BJ (cell line): ENCODE measurements at regions of chr6 and their contacts with region 1.

Region 1: DNA sequence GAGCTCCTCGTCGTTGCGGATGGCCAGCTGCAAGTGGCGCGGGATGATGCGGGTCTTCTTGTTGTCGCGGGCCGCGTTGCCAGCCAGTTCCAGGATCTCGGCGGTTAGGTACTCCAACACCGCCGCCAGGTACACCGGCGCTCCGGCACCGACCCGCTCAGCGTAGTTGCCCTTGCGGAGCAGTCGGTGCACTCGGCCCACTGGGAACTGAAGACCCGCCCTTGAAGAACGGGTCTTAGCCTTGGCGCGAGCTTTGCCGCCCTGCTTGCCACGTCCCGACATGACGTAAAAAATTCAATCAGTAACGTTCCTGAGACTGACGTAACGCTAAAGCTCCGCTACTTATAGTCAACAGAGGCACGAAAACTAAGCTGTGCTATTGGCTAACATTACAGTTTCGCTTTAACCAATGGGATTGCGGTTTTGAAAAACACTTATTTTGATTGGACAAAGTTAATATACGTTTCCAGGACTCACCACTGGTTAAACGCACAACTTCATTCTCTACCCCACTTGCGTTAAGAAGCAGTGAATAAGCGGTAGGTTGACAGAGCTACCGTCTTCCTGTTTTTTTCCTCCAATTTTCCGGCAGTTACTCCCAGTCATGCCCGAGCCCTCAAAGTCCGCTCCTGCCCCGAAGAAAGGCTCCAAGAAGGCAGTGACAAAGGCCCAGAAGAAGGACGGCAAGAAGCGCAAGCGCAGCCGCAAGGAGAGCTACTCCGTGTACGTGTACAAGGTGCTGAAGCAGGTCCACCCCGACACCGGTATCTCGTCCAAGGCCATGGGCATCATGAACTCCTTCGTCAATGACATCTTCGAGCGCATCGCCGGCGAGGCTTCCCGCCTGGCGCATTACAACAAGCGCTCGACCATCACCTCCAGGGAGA is 73.9 kb downstream of the OR2B2 start:
- DNase-seq: peak; percentile 99
- H3K4me3 ChIP-seq: peak overlapping the region; percentile 60
- H3K27me3 ChIP-seq: no peaks in the 10 kb centered on the region
- CTCF ChIP-seq: no peak

Region 2: DNA sequence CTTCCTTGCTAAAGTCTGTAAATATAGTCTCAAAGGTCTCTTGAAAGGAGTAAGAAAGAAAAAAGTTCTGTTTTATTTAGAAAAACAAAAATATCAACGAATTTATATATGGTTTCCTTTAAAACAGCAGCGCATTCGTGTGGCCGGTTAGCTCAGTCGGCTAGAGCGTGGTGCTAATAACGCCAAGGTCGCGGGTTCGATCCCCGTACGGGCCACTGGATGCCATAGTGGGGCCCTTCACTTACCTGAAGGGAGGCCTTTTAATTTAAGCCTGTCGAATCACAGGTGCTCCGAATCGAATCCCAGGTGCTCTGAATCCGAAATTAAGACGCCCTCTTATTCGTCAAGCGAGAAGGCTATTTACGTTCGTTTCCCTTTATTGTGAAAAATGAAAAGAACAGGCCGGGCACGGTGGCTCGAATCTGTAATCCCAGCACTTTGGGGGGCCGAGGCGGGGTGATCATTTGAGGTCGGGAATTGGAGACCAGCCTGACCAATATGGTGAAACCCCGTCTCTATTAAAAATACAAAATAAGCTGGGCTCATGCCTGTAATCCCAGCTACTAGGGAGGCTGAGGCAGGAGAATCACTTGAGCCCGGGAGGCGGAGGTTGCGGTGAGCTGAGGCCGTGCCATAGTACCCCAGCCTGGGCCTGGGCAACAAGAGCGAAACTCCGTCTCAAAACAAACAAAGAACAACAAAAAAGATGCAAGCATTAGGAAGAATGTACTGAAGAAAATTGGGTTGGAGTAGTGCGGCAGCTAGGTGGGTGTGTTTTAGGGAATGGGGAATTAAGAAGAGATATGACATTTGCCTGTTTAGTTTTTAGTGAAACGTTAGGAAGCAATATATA is 169.6 kb before region 1 on chr6:
- CTCF ChIA-PET with region 1: no interaction called
- POLR2A ChIA-PET with region 1: no interaction called
- DNase-seq: no peak
- H3K4me3 ChIP-seq: 0 out of 2 replicates have a peak overlapping the region, but pooled peaks have one; percentile 0
- H3K27me3 ChIP-seq: peaks cover 2% of the 10 kb centered on the region
- CTCF ChIP-seq: no peak

Region 3: DNA sequence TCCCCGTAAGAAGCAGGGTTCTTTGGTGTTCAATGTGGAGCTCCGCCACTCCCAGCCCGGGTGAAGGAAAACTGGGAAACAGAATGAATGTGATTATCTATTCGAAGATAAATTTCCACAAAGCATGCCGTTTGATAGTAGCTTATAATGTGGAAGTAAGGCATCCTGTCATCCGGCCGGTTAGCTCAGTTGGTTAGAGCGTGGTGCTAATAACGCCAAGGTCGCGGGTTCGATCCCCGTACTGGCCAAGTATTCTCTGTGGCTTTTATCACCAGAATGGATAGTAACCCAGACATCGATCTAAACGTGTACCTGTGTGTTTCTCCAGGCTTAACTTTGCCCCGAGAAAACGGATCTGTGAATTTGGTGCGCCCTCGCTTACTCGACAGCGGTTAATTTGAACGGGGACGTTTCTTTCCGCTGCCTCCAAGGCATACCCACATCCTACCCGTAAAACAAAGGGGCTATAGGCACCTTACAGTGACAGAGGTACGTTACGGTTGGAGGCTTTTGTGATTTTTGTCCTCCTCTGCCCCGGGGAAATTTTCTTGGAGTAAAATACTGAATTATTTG is 150.2 kb before region 1 on chr6:
- CTCF ChIA-PET with region 1: no interaction called
- POLR2A ChIA-PET with region 1: no interaction called
- DNase-seq: peak; percentile 54
- H3K4me3 ChIP-seq: peak overlapping the region; percentile 48
- H3K27me3 ChIP-seq: no peaks in the 10 kb centered on the region
- CTCF ChIP-seq: no peak

Region 4: GRCh38 chr6:27825025-27825793 is 13.1 kb before region 1 on chr6:
- CTCF ChIA-PET with region 1: interaction called, 6 read pairs
- POLR2A ChIA-PET with region 1: interaction called, 10 read pairs
- DNase-seq: no peak
- H3K4me3 ChIP-seq: peak overlapping the region; percentile 75
- H3K27me3 ChIP-seq: no peaks in the 10 kb centered on the region
- CTCF ChIP-seq: no peak

Region 5: GRCh38 chr6:27864906-27865849 is 26.9 kb after region 1 on chr6:
- CTCF ChIA-PET with region 1: interaction called, 13 read pairs
- POLR2A ChIA-PET with region 1: interaction called, 28 read pairs
- DNase-seq: peak; percentile 93
- H3K4me3 ChIP-seq: peak overlapping the region; percentile 60
- H3K27me3 ChIP-seq: no peaks in the 10 kb centered on the region
- CTCF ChIP-seq: no peak

Region 6: GRCh38 chr6:27871924-27872638 is 33.8 kb after region 1 on chr6:
- CTCF ChIA-PET with region 1: interaction called, 13 read pairs
- POLR2A ChIA-PET with region 1: interaction called, 26 read pairs
- DNase-seq: peak; percentile 90
- H3K4me3 ChIP-seq: peak overlapping the region; percentile 50
- H3K27me3 ChIP-seq: no peaks in the 10 kb centered on the region
- CTCF ChIP-seq: peak; percentile 30

Region 7: DNA sequence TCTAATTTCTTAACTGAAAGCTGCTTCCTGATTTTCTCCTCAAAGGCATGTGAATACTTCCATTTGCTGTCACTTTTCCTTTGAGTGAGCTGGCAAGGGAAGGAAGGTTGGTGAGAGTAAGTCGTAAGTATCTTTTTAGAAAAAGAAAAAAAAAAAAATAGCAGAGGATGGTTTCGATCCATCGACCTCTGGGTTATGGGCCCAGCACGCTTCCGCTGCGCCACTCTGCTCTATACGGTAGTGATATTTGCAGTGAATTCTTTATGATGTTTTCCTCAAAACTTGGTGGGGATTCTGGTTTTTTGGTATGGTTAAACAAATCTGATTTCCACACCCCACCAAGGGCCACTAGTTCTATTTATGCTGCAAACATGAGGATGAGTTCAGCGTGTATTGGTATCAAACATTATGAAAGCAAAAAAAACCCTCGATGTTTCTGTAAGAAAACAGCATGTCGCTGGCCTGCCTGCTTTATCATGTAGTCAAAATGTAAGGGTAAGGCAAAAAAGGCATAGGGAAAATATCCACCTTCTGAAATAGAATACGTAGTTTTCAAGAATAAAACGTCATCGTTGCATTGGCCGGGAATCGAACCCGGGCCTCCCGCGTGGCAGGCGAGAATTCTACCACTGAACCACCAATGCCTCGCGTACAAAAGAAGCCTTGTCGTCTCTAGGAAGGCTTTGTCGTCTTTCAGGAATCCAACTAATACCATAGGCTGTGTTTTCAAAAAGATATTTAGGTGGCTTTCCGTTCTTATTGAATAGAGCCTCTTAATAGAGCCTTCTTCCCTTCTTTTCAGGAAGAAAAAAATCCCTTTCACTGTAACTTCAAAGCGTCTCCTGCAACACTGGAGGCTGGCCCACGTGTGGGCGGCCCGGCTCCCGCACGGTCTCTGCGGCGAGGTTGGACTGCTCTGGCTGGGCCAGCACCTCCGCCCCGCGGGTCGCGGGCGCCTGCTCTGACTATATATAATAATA is 64.3 kb after region 1 on chr6:
- CTCF ChIA-PET with region 1: no interaction called
- POLR2A ChIA-PET with region 1: no interaction called
- DNase-seq: peak; percentile 48
- H3K4me3 ChIP-seq: peak overlapping the region; percentile 60
- H3K27me3 ChIP-seq: no peaks in the 10 kb centered on the region
- CTCF ChIP-seq: no peak